ENCODE measurements at regions of chr5 and their contacts with region 1.

Region 1: GRCh38 chr5:157142317-157143126 is at the start of gene MED7:
- DNase-seq: peak; percentile 80 to 99 (median 90)
- ATAC-seq: peak; percentile 95
- H3K4me3 ChIP-seq: peak within 1 kb of the TSS; percentile 93 to 99
- H3K4me3 Mint-ChIP-seq: peak within 1 kb of the TSS; percentile 93
- H3K27ac ChIP-seq: peak within 1 kb of the TSS; percentile 90 to 96
- H3K27ac Mint-ChIP-seq: peak within 1 kb of the TSS; percentile 97
- H3K4me1 ChIP-seq: peaks cover 21% of the 10 kb centered on the region
- H3K4me1 Mint-ChIP-seq: peaks cover 40% of the 10 kb centered on the region
- H3K27me3 ChIP-seq: no peaks in the 10 kb centered on the region
- H3K27me3 Mint-ChIP-seq: no peaks in the 10 kb centered on the region
- CTCF ChIP-seq: no peak
- total RNA-seq, gene MED7: 5.4 to 5.9 TPM

Region 2: DNA sequence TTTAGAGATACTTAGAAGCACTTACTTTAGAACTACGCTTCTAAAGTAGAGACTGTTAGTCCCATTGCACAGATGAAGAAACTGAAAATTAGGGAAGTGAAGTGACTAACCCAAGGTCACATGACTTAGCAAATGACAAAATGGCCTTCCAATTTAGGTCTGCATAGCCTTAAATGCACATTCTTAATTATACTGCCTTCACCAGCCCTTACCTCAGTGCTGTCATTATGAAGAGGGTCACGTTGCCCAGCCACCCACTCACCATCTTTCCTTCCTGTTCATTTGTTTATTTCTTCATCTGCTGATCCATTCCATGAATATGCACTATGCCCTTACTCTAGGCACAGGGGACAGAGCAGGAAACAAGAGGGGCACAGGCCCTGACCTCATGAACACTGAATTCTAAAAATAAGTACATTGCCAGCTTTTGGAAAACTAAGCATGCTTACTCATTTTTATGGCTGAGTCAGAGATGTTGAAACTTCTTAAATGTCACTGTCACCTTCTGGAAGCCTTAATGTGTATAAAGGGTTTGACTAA is 42.3 kb before region 1 on chr5:
- CTCF ChIA-PET with region 1: no interaction called
- POLR2A ChIA-PET with region 1: no interaction called
- intact Hi-C with region 1: no loop called
- DNase-seq: peak in 1 of 9 experiments; percentile 17
- ATAC-seq: no peak
- H3K4me3 ChIP-seq: no peak overlapping the region
- H3K4me3 Mint-ChIP-seq: no peak overlapping the region
- H3K27ac ChIP-seq: no peak overlapping the region
- H3K27ac Mint-ChIP-seq: no peak overlapping the region
- H3K4me1 ChIP-seq: peaks cover 4% of the 10 kb centered on the region
- H3K4me1 Mint-ChIP-seq: peaks cover 2% of the 10 kb centered on the region
- H3K27me3 ChIP-seq: no peaks in the 10 kb centered on the region
- H3K27me3 Mint-ChIP-seq: no peaks in the 10 kb centered on the region
- CTCF ChIP-seq: no peak

Region 3: GRCh38 chr5:157159209-157159751 is 16.8 kb after region 1 on chr5:
- CTCF ChIA-PET with region 1: interaction called, 6 read pairs
- POLR2A ChIA-PET with region 1: interaction called, 4 read pairs
- intact Hi-C with region 1: loop called in 1 of 2 experiments (anchors 1 kb)
- DNase-seq: peak in 6 of 9 experiments; percentile 29 to 72 (median 53)
- ATAC-seq: peak; percentile 81
- H3K4me3 ChIP-seq: no peak overlapping the region
- H3K4me3 Mint-ChIP-seq: peak overlapping the region; percentile 13
- H3K27ac ChIP-seq: peak overlapping the region; percentile 23 to 78
- H3K27ac Mint-ChIP-seq: peak overlapping the region; percentile 58
- H3K4me1 ChIP-seq: peaks cover 38% of the 10 kb centered on the region
- H3K4me1 Mint-ChIP-seq: peaks cover 62% of the 10 kb centered on the region
- H3K27me3 ChIP-seq: no peaks in the 10 kb centered on the region
- H3K27me3 Mint-ChIP-seq: no peaks in the 10 kb centered on the region
- CTCF ChIP-seq: no peak

Region 4: DNA sequence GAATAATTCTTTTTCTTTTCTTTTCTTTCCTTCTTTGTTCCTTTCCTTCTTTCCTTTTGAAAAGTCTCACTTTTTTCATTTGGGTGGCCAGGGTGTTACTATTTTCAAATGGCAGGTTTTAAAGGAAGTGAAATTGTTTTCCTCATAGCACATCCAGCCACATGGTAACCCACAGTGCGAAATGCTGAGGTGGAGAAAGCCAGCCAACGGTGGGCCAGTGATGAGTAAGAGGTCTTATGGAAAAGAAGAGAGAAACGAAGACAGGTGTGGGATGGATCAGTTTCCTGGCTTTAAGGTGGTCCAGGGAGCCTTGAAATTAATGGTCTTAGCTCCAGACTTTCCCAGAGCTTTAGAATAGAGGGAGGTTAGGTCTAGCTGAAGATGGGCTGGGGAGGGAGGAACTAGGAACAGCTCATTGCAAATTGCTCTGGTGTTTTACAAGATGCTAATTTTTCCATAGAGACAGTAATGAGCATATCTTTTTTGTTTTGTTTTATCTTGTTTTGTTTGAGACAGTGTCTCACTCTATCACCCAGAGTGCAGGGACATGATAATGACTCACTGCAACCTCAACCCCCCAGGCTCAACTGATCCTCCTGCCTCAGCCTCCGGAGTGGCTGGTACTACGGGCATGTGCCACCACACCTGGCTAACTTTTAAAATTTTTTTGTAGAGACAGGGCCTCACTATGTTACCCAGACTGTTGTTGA is 55.9 kb after region 1 on chr5:
- CTCF ChIA-PET with region 1: interaction called, 21 read pairs
- POLR2A ChIA-PET with region 1: interaction called, 12 read pairs
- intact Hi-C with region 1: no loop called
- DNase-seq: peak in 6 of 9 experiments; percentile 42 to 84 (median 66)
- ATAC-seq: peak; percentile 60
- H3K4me3 ChIP-seq: no peak overlapping the region
- H3K4me3 Mint-ChIP-seq: peak overlapping the region; percentile 63
- H3K27ac ChIP-seq: peak overlapping the region; percentile 32 to 83
- H3K27ac Mint-ChIP-seq: peak overlapping the region; percentile 94
- H3K4me1 ChIP-seq: peaks cover 97% of the 10 kb centered on the region
- H3K4me1 Mint-ChIP-seq: peaks cover 93% of the 10 kb centered on the region
- H3K27me3 ChIP-seq: no peaks in the 10 kb centered on the region
- H3K27me3 Mint-ChIP-seq: no peaks in the 10 kb centered on the region
- CTCF ChIP-seq: no peak

Region 5: DNA sequence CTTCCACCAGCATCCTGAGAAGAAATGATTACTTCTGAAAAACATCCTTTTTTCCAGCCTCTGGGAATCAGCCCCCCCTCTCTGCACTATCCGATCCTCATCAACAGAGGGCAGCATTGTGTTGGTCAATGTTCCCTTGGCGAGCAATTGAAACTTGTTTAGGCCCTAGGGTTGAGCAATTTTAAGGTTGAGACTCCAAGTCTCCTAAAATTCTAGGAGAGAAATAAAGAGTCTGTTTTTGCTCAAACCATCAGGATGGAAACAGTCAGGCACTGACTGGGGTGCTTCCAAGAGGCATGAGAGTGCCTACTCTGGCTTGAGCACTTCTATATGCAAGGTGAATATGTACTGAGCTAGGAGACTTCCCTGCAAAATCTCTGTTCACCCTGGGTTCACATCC is 111.0 kb after region 1 on chr5:
- CTCF ChIA-PET with region 1: interaction called, 28 read pairs
- POLR2A ChIA-PET with region 1: interaction called, 15 read pairs
- intact Hi-C with region 1: no loop called
- DNase-seq: peak in 1 of 9 experiments; percentile 29
- ATAC-seq: no peak
- H3K4me3 ChIP-seq: no peak overlapping the region
- H3K4me3 Mint-ChIP-seq: peak overlapping the region; percentile 61
- H3K27ac ChIP-seq: peak overlapping the region; percentile 61 to 72
- H3K27ac Mint-ChIP-seq: peak overlapping the region; percentile 92
- H3K4me1 ChIP-seq: peaks cover 97% of the 10 kb centered on the region
- H3K4me1 Mint-ChIP-seq: peaks cover 93% of the 10 kb centered on the region
- H3K27me3 ChIP-seq: no peaks in the 10 kb centered on the region
- H3K27me3 Mint-ChIP-seq: no peaks in the 10 kb centered on the region
- CTCF ChIP-seq: peak; percentile 54

Region 6: GRCh38 chr5:157575381-157576020 is 433.0 kb after region 1 on chr5 and contains the start of gene ADAM19:
- CTCF ChIA-PET with region 1: no interaction called
- POLR2A ChIA-PET with region 1: no interaction called
- intact Hi-C with region 1: no loop called
- DNase-seq: peak in 5 of 9 experiments; percentile 23 to 53 (median 42)
- ATAC-seq: peak; percentile 74
- H3K4me3 ChIP-seq: peak within 1 kb of the TSS; percentile 54 to 56
- H3K4me3 Mint-ChIP-seq: peak within 1 kb of the TSS; percentile 91
- H3K27ac ChIP-seq: no peak within 1 kb of the TSS
- H3K27ac Mint-ChIP-seq: peak within 1 kb of the TSS; percentile 58
- H3K4me1 ChIP-seq: no peaks in the 10 kb centered on the region
- H3K4me1 Mint-ChIP-seq: peaks cover 24% of the 10 kb centered on the region
- H3K27me3 ChIP-seq: peaks cover 8 to 10% of the 10 kb centered on the region in 2 experiments
- H3K27me3 Mint-ChIP-seq: peaks cover 10% of the 10 kb centered on the region
- CTCF ChIP-seq: no peak
- total RNA-seq, gene ADAM19: 5.9 to 6.5 TPM

Region 7: GRCh38 chr5:157731272-157732129 is 589.0 kb after region 1 on chr5 and contains the start of gene THG1L:
- CTCF ChIA-PET with region 1: no interaction called
- POLR2A ChIA-PET with region 1: interaction called, 6 read pairs
- intact Hi-C with region 1: loop called (anchors 1 kb)
- DNase-seq: peak; percentile 95 to 99 (median 97)
- ATAC-seq: peak; percentile 94
- H3K4me3 ChIP-seq: peak within 1 kb of the TSS; percentile 75 to 82
- H3K4me3 Mint-ChIP-seq: peak within 1 kb of the TSS; percentile 96
- H3K27ac ChIP-seq: peak within 1 kb of the TSS; percentile 68 to 86
- H3K27ac Mint-ChIP-seq: peak within 1 kb of the TSS; percentile 95
- H3K4me1 ChIP-seq: no peaks in the 10 kb centered on the region
- H3K4me1 Mint-ChIP-seq: peaks cover 14% of the 10 kb centered on the region
- H3K27me3 ChIP-seq: no peaks in the 10 kb centered on the region
- H3K27me3 Mint-ChIP-seq: no peaks in the 10 kb centered on the region
- CTCF ChIP-seq: no peak
- total RNA-seq, gene THG1L: 6.9 to 7.1 TPM

Region 8: DNA sequence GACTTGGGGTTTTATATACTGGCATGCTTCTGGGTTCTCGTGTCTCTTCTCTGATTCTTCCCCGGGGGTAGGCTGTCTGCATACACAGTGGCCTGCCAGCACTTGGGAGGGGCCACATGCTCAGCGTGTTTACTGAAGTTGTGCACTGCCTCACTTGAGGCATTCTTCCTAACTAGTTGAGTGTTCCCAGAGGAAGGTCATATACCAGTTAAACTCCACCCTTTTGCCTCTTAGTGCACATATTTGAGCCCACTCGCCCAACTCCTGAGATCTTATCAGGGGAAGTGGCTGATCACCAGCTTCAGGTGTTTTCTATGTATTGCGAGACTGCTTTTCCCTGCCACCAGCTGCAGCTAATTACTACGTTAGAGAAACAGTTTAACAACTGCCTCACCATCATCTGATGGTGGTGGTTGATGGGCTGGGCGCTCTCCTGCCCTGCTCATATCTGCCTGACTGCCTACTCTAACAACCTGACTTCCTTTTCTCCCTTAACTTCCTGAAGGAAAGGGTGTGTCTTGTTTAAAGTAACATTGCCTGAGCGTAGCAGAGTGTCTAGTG is 776.4 kb after region 1 on chr5:
- CTCF ChIA-PET with region 1: no interaction called
- POLR2A ChIA-PET with region 1: no interaction called
- intact Hi-C with region 1: no loop called
- DNase-seq: peak in 4 of 9 experiments; percentile 4 to 51 (median 14)
- ATAC-seq: no peak
- H3K4me3 ChIP-seq: no peak overlapping the region
- H3K4me3 Mint-ChIP-seq: peak overlapping the region; percentile 68
- H3K27ac ChIP-seq: no peak overlapping the region
- H3K27ac Mint-ChIP-seq: peak overlapping the region; percentile 55
- H3K4me1 ChIP-seq: peaks cover 17% of the 10 kb centered on the region
- H3K4me1 Mint-ChIP-seq: peaks cover 28% of the 10 kb centered on the region
- H3K27me3 ChIP-seq: no peaks in the 10 kb centered on the region
- H3K27me3 Mint-ChIP-seq: no peaks in the 10 kb centered on the region
- CTCF ChIP-seq: no peak